GM23248 (cell line): ENCODE measurements at regions of chr9 and their contacts with region 1.

Region 1: GRCh38 chr9:115013998-115014397 is 83.6 kb upstream of the TNFSF8 start:
- DNase-seq: peak; percentile 83
- H3K4me3 ChIP-seq: no peak overlapping the region
- H3K27ac ChIP-seq: no peak overlapping the region
- H3K4me1 ChIP-seq: peaks cover 9% of the 10 kb centered on the region
- H3K27me3 ChIP-seq: no peaks in the 10 kb centered on the region

Region 2: DNA sequence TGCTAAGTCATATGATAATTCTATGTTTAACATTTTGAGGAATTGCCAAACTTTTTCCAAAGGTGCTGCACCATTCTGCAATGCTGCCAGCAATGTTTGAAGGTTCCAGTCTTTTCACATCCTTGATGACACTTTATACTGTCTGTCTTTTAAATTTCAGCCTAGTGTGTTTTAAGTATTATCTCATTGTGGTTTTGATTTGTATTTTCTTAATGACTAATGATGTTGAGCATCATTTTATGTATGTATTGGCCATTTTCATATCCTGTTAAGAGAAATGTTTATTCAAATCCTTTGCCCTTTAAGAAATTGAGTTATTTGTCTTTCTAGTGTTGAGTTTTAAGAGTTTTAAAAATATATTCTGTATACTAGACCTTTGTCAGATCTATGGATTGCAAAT is 327.0 kb before region 1 on chr9:
- in situ Hi-C with region 1: loop called (anchors 5 kb)
- DNase-seq: peak; percentile 56
- H3K4me3 ChIP-seq: no peak overlapping the region
- H3K27ac ChIP-seq: no peak overlapping the region
- H3K4me1 ChIP-seq: peaks cover 22% of the 10 kb centered on the region
- H3K27me3 ChIP-seq: no peaks in the 10 kb centered on the region

Region 3: GRCh38 chr9:114745108-114745848 is 268.7 kb before region 1 on chr9:
- in situ Hi-C with region 1: loop called (anchors 5 kb)
- DNase-seq: peak; percentile 64
- H3K4me3 ChIP-seq: no peak overlapping the region
- H3K27ac ChIP-seq: no peak overlapping the region
- H3K4me1 ChIP-seq: peaks cover 22% of the 10 kb centered on the region
- H3K27me3 ChIP-seq: no peaks in the 10 kb centered on the region

Region 4: GRCh38 chr9:114799441-114799840 is 214.6 kb before region 1 on chr9:
- in situ Hi-C with region 1: no loop called
- DNase-seq: no peak
- H3K4me3 ChIP-seq: no peak overlapping the region
- H3K27ac ChIP-seq: no peak overlapping the region
- H3K4me1 ChIP-seq: no peaks in the 10 kb centered on the region
- H3K27me3 ChIP-seq: 0 out of 2 replicates have a peak, but pooled peaks cover 6% of the 10 kb centered on the region

Region 5: GRCh38 chr9:114919611-114920010 is 94.4 kb before region 1 on chr9:
- in situ Hi-C with region 1: loop called (anchors 5 kb)
- DNase-seq: no peak
- H3K4me3 ChIP-seq: no peak overlapping the region
- H3K27ac ChIP-seq: no peak overlapping the region
- H3K4me1 ChIP-seq: no peaks in the 10 kb centered on the region
- H3K27me3 ChIP-seq: peaks cover 7% of the 10 kb centered on the region; the same call in 1 of the 2 replicates